Pancreas (tissue), 10 donors: ENCODE measurements at regions of chr16 and their contacts with region 1.

Region 1: GRCh38 chr16:10971560-10971961 is 27.2 kb downstream of the CLEC16A start:
- DNase-seq: peak in 2 of 6 donors; percentile 21 to 29
- ATAC-seq: peak in 3 of 4 donors; percentile 79 to 88 (median 87)
- H3K4me3 ChIP-seq: no peak overlapping the region
- H3K27ac ChIP-seq: no peak overlapping the region
- H3K4me1 ChIP-seq: peaks cover 0 to 6% (median 0%) of the 10 kb centered on the region in 3 donors
- H3K27me3 ChIP-seq: no peaks in the 10 kb centered on the region
- CTCF ChIP-seq: peak; percentile 42 to 59 (median 55)

Region 2: DNA sequence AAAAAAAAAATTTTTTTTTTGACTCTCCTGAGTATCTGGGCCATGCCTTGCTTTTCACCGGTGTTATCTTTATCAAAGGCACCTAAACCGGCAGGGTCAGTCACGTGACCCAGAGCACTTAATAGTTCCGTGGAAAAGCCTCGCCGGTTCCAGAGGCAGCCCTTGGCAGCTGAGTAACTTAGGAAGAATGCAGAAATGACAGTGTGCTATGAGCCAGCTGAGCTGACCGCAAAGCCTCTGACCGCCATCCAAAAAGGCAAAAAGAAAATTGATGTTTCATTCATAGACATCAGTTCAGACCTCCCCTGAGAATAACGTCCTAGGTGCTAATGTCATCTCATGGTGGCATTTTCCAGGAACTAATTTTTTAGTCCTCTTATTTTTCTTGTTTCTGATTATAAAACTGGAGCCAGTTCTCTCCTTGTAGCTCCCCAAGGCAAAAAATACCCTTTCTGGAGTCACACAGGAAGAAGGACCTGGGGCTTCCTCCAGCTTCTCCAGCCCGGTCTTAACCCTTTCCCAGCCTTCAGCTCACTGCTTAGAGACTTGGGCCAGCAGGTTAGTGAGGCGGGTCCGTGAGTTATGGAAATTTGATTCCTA is 161.9 kb after region 1 on chr16:
- intact Hi-C with region 1: no loop called
- DNase-seq: peak in 5 of 6 donors; percentile 68 to 79 (median 74)
- ATAC-seq: peak; percentile 83 to 88 (median 87)
- H3K4me3 ChIP-seq: no peak overlapping the region
- H3K27ac ChIP-seq: peak overlapping the region; percentile 4 to 84 (median 46)
- H3K4me1 ChIP-seq: peaks cover 3 to 10% (median 4%) of the 10 kb centered on the region in 3 donors
- H3K27me3 ChIP-seq: no peaks in the 10 kb centered on the region
- CTCF ChIP-seq: no peak

Region 3: GRCh38 chr16:11255737-11256660 is 284.4 kb after region 1 on chr16 and contains the start of gene SOCS1:
- intact Hi-C with region 1: loop called in 2 of 3 experiments (anchors 5 kb)
- DNase-seq: peak; percentile 79 to 94 (median 88)
- ATAC-seq: peak; percentile 80 to 87 (median 84)
- H3K4me3 ChIP-seq: peak within 1 kb of the TSS; percentile 59 to 83 (median 72)
- H3K27ac ChIP-seq: peak within 1 kb of the TSS; percentile 82 to 97 (median 90)
- H3K4me1 ChIP-seq: peaks cover 3 to 17% (median 11%) of the 10 kb centered on the region in 3 donors
- H3K27me3 ChIP-seq: no peaks in the 10 kb centered on the region
- CTCF ChIP-seq: peak; percentile 81 to 95 (median 90)
- total RNA-seq, gene SOCS1: 1.3 to 7.9 (median 1.8) TPM

Region 4: GRCh38 chr16:11356573-11357331 is 385.2 kb after region 1 on chr16:
- intact Hi-C with region 1: loop called in 1 of 3 experiments (anchors 5 kb)
- DNase-seq: peak; percentile 41 to 84 (median 66)
- ATAC-seq: peak in 3 of 4 donors; percentile 65 to 83 (median 80)
- H3K4me3 ChIP-seq: no peak overlapping the region
- H3K27ac ChIP-seq: peak overlapping the region in 3 of 4 donors; percentile 64 to 81 (median 80)
- H3K4me1 ChIP-seq: no peaks in the 10 kb centered on the region
- H3K27me3 ChIP-seq: no peaks in the 10 kb centered on the region
- CTCF ChIP-seq: peak; percentile 7 to 36 (median 30)